Activated CD4-positive, alpha-beta memory T cell treated with anti-CD3 and anti-CD28 coated beads for 36 hours (primary cell): ENCODE measurements at regions of chr5 and their contacts with region 1.

Region 1: DNA sequence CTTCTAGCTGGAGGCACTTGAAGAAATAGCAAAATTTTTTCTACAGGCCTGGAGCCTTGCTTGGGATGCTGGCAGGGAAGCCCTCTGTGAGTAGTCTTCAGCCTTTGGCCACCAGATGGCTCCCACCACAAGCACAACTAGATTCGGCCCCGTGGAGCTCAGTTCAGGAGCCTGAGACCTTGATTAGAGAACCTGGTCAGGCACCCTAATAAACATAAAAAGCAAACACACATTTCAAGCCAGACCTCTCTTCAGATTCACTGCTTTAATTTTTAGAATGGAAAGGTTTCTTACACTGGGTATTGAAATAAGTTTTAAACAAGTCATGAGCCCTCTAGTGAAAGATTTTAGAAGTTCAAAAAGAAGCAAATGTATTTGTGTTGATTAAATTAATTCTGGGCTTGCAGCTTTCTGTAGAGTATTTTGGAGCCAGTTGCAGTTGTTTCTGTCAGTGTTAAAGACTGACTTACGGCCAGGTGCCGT is 41.4 kb downstream of the GLRX start:
- DNase-seq: peak; percentile 81
- H3K4me3 Mint-ChIP-seq: peak overlapping the region; percentile 26
- H3K27ac Mint-ChIP-seq: no peak overlapping the region
- H3K4me1 Mint-ChIP-seq: peaks cover 4% of the 10 kb centered on the region
- H3K27me3 Mint-ChIP-seq: no peaks in the 10 kb centered on the region

Region 2: DNA sequence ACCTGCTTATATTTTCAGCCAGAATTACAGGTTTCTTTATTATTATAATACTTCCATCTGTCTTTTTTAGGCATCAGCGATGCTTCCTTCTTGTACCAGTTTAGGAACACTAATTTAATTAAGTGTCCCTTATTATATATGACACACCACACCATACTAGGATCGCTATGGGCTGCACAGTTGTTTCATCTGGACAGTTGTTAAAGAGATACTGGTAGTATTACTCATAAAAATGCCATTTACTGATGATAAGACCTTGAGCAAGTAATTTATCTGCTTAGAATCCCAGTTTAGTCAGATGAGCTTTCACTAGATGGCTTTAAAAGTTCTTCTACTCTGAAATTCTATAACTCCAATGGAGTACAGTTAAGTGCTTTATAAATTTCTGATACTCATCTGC is 209.1 kb before region 1 on chr5:
- CTCF ChIA-PET with region 1: no interaction called
- POLR2A ChIA-PET with region 1: no interaction called
- intact Hi-C with region 1: no loop called
- DNase-seq: no peak
- H3K4me3 Mint-ChIP-seq: no peak overlapping the region
- H3K27ac Mint-ChIP-seq: no peak overlapping the region
- H3K4me1 Mint-ChIP-seq: peaks cover 2% of the 10 kb centered on the region
- H3K27me3 Mint-ChIP-seq: no peaks in the 10 kb centered on the region

Region 3: DNA sequence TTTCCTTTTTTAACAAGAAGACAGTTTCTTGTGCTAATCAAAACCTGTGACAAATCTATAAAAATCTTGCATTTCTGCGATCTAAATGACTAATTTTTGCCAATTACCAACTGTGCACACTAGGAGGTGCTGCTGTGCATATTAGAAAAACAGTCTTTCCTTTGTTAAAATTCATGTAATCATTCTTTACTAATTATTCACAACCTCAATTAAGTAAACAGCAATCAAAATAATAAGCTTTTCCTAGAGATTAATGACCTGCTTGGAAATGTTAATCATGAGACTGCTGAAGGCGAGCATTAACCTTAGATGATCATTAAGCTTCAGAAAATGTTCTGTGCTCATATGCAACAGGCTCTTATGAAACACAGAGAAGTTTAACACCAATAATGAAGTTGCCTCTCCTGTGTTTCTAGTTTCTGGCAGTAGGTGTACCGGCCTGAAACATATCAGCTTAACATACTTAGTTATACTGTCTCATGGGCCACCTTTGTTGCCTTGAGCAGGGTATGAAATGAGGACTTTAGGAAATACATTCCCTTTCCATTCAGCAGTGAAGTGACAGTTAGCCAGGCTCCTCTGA is 116.8 kb before region 1 on chr5:
- CTCF ChIA-PET with region 1: interaction called, 31 read pairs
- POLR2A ChIA-PET with region 1: interaction called, 3 read pairs
- intact Hi-C with region 1: loop called (anchors 1 kb)
- DNase-seq: no peak
- H3K4me3 Mint-ChIP-seq: no peak overlapping the region
- H3K27ac Mint-ChIP-seq: no peak overlapping the region
- H3K4me1 Mint-ChIP-seq: peaks cover 1% of the 10 kb centered on the region
- H3K27me3 Mint-ChIP-seq: no peaks in the 10 kb centered on the region

Region 4: DNA sequence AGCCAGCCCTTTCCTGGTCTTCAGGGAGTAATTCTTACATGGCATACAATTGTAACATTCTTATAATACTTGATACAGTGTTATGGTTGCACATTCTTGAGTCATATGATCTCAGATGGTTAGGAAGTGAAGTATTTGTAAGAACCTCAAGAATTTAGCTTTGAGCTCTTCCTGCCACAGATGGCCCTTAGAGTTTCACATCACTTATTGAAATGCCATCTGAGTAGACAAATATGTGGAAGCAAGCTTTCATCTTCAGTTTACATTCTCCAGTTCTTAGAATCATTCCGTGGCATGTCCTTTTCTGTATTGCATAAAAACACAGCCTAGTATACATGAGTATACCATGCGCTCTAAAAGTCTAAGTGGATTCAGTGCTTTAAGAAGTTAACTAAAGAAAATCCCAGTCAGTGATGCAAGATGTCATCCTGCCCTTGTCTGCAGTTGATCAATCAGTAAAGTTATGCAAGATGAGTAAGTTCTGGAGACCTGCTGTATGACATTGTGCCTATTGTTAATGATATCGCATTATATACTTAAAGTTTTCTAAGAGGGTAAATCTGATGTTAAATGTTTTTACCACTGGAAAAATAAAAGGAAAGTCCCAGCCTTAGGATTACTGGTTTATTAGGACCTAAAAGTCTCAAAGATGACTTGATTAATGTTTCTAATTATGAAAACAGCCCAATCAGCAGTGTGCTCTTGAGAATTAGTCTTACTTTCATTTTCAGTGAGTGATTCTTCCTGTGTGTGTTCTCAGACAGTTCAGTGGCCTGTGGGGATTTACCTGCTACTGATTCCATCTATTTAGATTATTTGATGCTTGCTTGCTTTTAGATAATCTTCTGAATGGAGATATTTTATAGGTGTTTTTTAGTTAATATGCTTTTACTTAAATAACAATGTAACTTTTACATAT is 20.6 kb before region 1 on chr5:
- CTCF ChIA-PET with region 1: interaction called, 11 read pairs
- POLR2A ChIA-PET with region 1: interaction called, 3 read pairs
- intact Hi-C with region 1: no loop called
- DNase-seq: no peak
- H3K4me3 Mint-ChIP-seq: peak overlapping the region; percentile 57
- H3K27ac Mint-ChIP-seq: peak overlapping the region; percentile 64
- H3K4me1 Mint-ChIP-seq: peaks cover 23% of the 10 kb centered on the region
- H3K27me3 Mint-ChIP-seq: peaks cover 4% of the 10 kb centered on the region

Region 5: DNA sequence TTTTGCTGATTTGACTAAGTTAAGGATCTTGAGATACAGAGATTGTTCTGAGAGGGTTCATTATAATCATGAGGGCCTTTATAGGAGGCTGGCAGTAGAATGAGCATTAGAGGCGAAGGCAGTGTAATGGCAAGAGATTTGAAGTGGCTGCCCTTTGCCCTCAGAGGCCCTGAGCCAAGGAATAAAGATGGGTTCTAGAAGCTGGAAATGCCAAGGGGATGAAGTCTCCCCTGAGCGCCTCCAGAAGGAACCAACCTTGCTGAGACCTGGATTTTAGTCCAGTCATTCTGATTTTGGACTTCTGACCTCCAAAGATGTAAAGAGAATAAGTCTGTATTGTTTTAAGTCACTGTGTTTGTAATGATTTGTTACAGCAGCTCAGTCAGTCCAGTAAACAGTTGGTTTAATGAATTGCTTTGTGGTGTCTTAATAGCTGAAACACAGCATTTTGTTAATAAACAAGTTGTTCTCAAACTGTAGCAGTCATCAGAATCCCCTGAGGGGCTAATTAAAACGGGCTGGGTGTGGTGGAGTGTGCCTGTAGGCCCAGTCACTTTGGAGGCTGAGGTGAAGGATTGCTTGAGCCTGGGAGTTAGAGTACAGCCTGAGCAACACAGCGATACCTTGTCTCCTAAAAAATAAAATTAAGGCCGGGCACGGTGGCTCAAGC is 18.2 kb after region 1 on chr5:
- CTCF ChIA-PET with region 1: interaction called, 46 read pairs
- POLR2A ChIA-PET with region 1: no interaction called
- intact Hi-C with region 1: no loop called
- DNase-seq: no peak
- H3K4me3 Mint-ChIP-seq: no peak overlapping the region
- H3K27ac Mint-ChIP-seq: no peak overlapping the region
- H3K4me1 Mint-ChIP-seq: no peaks in the 10 kb centered on the region
- H3K27me3 Mint-ChIP-seq: no peaks in the 10 kb centered on the region

Region 6: DNA sequence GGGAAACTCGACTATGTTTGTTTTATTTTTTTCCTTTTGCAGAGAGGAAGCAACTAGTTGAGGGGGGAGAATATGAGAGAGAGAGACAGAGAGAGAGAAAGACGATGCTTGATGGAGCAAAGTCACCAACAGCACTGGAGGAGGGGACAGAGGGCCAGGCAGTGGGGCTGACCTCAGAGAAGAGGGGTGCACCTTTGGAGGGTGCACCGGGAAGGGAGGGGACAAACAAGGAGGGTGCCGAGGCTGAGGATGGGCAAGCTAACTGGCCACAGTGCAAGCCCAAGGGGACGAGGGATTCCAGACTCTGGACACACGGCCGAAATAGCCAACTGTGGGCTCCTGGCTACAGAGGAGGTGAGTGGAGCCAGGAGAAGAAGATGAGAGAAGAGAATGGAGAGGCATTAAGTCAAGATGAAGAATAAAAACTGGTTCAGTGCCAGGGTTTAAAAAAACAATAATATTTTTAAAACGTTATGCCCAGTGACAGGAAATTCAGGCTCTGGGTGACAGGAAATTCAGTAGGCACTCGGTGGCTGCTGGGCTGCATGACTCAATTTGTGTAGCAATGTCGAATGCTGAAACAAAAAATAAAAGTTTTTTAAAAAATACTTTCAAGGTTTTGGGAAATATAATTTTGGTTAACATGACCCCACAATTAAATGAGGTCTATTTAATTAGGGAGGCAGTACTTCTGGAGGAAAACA is 54.7 kb after region 1 on chr5:
- CTCF ChIA-PET with region 1: interaction called, 463 read pairs
- POLR2A ChIA-PET with region 1: no interaction called
- intact Hi-C with region 1: no loop called
- DNase-seq: no peak
- H3K4me3 Mint-ChIP-seq: peak overlapping the region; percentile 75
- H3K27ac Mint-ChIP-seq: peak overlapping the region; percentile 91
- H3K4me1 Mint-ChIP-seq: peaks cover 50% of the 10 kb centered on the region
- H3K27me3 Mint-ChIP-seq: no peaks in the 10 kb centered on the region

Region 7: DNA sequence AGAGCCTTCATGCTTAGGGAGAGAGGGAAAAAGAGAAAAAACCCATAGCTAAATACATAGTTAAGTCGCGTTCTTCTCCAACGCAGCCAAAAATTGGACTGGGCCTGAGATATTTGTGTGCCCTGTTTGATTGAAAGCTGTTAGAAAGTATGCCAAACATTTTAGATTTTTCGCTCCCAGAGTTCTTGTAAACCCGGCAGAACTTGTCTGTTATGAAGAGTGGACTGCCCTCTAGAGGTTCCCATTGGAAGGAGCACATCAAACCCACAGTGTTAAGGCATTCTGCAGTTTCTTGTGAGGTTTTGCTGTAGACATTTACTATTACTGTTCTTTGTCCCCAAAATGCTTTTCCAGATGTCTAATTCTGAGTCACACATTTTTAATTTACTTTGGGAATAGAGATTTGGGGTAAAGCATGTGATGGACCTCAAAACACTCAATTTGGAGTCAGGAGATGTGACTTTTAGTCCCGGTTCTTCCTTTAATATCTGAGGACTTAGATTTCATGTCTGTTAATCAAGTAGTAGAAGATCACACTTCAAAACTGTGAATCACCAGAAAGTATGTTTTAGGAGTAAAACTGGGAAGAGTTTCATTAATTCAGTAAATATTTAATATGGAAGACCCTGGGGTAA is 555.3 kb after region 1 on chr5:
- CTCF ChIA-PET with region 1: interaction called, 20 read pairs
- POLR2A ChIA-PET with region 1: no interaction called
- intact Hi-C with region 1: loop called (anchors 1 kb)
- DNase-seq: peak; percentile 67
- H3K4me3 Mint-ChIP-seq: no peak overlapping the region
- H3K27ac Mint-ChIP-seq: no peak overlapping the region
- H3K4me1 Mint-ChIP-seq: peaks cover 11% of the 10 kb centered on the region
- H3K27me3 Mint-ChIP-seq: peaks cover 19% of the 10 kb centered on the region